B cell (primary cell): ENCODE measurements at regions of chr11 and their contacts with region 1.

Region 1: GRCh38 chr11:124875943-124876817 is 10.9 kb downstream of the ROBO3 start:
- DNase-seq: peak; percentile 86
- ATAC-seq: peak; percentile 89
- H3K4me3 ChIP-seq: peak overlapping the region in 4 of 5 experiments; percentile 50 to 77 (median 64)
- H3K4me3 Mint-ChIP-seq: peak overlapping the region; percentile 90
- H3K27ac ChIP-seq: peak overlapping the region in 1 of 2 donors; percentile 36
- H3K27ac Mint-ChIP-seq: peak overlapping the region; percentile 37
- H3K4me1 ChIP-seq: peaks cover 19 to 22% of the 10 kb centered on the region in 2 donors
- H3K4me1 Mint-ChIP-seq: peaks cover 24% of the 10 kb centered on the region
- H3K27me3 ChIP-seq: peaks cover 0 to 68% (median 20%) of the 10 kb centered on the region in 4 experiments
- H3K27me3 Mint-ChIP-seq: peaks cover 80% of the 10 kb centered on the region
- CTCF ChIP-seq: peak; percentile 81

Region 2: DNA sequence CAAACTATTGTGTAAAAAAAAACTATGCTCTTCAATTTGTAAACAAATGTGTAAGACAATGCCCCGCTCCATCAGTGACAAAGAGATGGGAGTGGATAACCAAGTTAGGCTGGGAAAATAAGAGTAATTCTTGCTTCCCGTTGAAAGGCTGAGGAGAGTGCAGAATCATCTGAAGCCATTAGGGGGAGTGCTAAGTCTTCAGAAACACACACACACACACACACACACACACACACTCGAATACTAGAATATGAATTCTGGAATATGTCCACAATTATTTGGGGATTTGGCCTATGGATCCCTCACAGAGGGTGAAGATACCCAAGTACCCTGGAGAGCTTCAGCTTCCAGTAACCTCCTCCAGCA is 38.7 kb before region 1 on chr11:
- CTCF ChIA-PET with region 1: interaction called, 5 read pairs
- POLR2A ChIA-PET with region 1: no interaction called
- intact Hi-C with region 1: loop called (anchors 5 kb)
- DNase-seq: peak; percentile 43
- ATAC-seq: no peak
- H3K4me3 ChIP-seq: no peak overlapping the region
- H3K4me3 Mint-ChIP-seq: no peak overlapping the region
- H3K27ac ChIP-seq: no peak overlapping the region
- H3K27ac Mint-ChIP-seq: no peak overlapping the region
- H3K4me1 ChIP-seq: peaks cover 24 to 30% of the 10 kb centered on the region in 2 donors
- H3K4me1 Mint-ChIP-seq: peaks cover 18% of the 10 kb centered on the region
- H3K27me3 ChIP-seq: peaks cover 0 to 53% (median 42%) of the 10 kb centered on the region in 4 experiments
- H3K27me3 Mint-ChIP-seq: peaks cover 62% of the 10 kb centered on the region
- CTCF ChIP-seq: no peak

Region 3: GRCh38 chr11:124865921-124866583 is 10.1 kb before region 1 on chr11:
- CTCF ChIA-PET with region 1: interaction called, 15 read pairs
- POLR2A ChIA-PET with region 1: no interaction called
- intact Hi-C with region 1: no loop called
- DNase-seq: peak; percentile 67
- ATAC-seq: peak; percentile 66
- H3K4me3 ChIP-seq: peak overlapping the region in 2 of 5 experiments; percentile 11 to 20
- H3K4me3 Mint-ChIP-seq: peak overlapping the region; percentile 37
- H3K27ac ChIP-seq: no peak overlapping the region
- H3K27ac Mint-ChIP-seq: no peak overlapping the region
- H3K4me1 ChIP-seq: peaks cover 39 to 50% of the 10 kb centered on the region in 2 donors
- H3K4me1 Mint-ChIP-seq: peaks cover 23% of the 10 kb centered on the region
- H3K27me3 ChIP-seq: peaks cover 0 to 97% (median 69%) of the 10 kb centered on the region in 4 experiments
- H3K27me3 Mint-ChIP-seq: peaks cover 82% of the 10 kb centered on the region
- CTCF ChIP-seq: peak; percentile 71

Region 4: GRCh38 chr11:125036933-125037332 is 160.8 kb after region 1 on chr11:
- CTCF ChIA-PET with region 1: no interaction called
- POLR2A ChIA-PET with region 1: no interaction called
- intact Hi-C with region 1: no loop called
- DNase-seq: no peak
- ATAC-seq: peak; percentile 28
- H3K4me3 ChIP-seq: no peak overlapping the region
- H3K4me3 Mint-ChIP-seq: no peak overlapping the region
- H3K27ac ChIP-seq: no peak overlapping the region
- H3K27ac Mint-ChIP-seq: no peak overlapping the region
- H3K4me1 ChIP-seq: no peaks in the 10 kb centered on the region
- H3K4me1 Mint-ChIP-seq: no peaks in the 10 kb centered on the region
- H3K27me3 ChIP-seq: no peaks in the 10 kb centered on the region
- H3K27me3 Mint-ChIP-seq: no peaks in the 10 kb centered on the region
- CTCF ChIP-seq: no peak